ENCODE measurements at regions of chr18 and their contacts with region 1.

Region 1: GRCh38 chr18:58768293-58768974 is 96.2 kb upstream of the ZNF532 start:
- DNase-seq: peak; percentile 76 to 79 (median 77)
- ATAC-seq: peak; percentile 95 to 97 (median 96)
- H3K4me3 ChIP-seq: peak overlapping the region; percentile 14 to 38 (median 17)
- H3K27ac ChIP-seq: no peak overlapping the region
- H3K4me1 ChIP-seq: peaks cover 0 to 8% (median 2%) of the 10 kb centered on the region in 4 donors
- H3K27me3 ChIP-seq: no peaks in the 10 kb centered on the region
- CTCF ChIP-seq: peak; percentile 76 to 92 (median 84)
- POLR2A ChIP-seq: no peak

Region 2: GRCh38 chr18:58493516-58494253 is 274.7 kb before region 1 on chr18:
- intact Hi-C with region 1: loop called in 1 of 2 experiments (anchors 10 kb)
- DNase-seq: peak; percentile 68 to 81 (median 72)
- ATAC-seq: peak; percentile 94 to 97 (median 95)
- H3K4me3 ChIP-seq: no peak overlapping the region
- H3K27ac ChIP-seq: peak overlapping the region in 1 of 3 donors; percentile 31
- H3K4me1 ChIP-seq: peaks cover 0 to 9% (median 0%) of the 10 kb centered on the region in 4 donors
- H3K27me3 ChIP-seq: no peaks in the 10 kb centered on the region
- CTCF ChIP-seq: peak; percentile 80 to 93 (median 86)
- POLR2A ChIP-seq: no peak

Measured in right lobe of liver (tissue), 6 donors.